Posterior vena cava (tissue), 2 donors: ENCODE measurements at regions of chr3 and their contacts with region 1.

Region 1: DNA sequence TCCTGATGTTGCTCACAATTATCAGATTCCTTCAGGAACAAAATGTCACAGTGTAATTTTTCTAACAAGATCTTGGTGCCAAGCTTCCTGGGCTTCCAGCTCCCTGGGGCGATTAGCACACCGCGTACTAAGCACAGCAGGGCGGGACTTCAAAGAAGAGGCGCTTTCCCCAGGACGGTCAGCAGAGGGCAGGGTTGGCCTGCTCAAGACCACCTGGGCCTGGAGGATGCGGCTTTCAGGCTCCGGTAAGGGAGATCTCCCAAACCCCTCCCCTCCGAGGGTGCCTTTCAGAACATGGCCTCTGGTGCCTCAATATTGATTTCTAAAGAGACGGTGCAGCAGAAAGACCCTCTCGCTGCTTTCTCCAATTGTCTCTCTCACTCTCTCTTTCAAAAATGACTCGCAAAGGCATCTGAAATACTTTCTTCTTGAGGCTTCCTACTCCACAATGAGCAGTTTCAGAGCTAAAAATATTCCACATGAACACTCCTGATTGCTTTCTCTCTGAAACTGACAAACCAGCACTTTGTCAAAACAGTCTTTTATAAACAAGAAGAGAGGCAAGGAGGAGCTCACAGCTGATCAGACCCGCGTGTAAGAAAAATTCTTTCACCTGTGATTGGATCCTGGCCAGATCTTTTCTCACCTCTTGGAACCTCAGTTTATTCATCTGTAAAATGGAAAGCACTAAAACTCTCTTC is 154.0 kb downstream of the ADAMTS9 start:
- DNase-seq: peak; percentile 94

Region 2: GRCh38 chr3:64475037-64475436 is 58.7 kb before region 1 on chr3:
- intact Hi-C with region 1: no loop called
- DNase-seq: no peak

Region 3: DNA sequence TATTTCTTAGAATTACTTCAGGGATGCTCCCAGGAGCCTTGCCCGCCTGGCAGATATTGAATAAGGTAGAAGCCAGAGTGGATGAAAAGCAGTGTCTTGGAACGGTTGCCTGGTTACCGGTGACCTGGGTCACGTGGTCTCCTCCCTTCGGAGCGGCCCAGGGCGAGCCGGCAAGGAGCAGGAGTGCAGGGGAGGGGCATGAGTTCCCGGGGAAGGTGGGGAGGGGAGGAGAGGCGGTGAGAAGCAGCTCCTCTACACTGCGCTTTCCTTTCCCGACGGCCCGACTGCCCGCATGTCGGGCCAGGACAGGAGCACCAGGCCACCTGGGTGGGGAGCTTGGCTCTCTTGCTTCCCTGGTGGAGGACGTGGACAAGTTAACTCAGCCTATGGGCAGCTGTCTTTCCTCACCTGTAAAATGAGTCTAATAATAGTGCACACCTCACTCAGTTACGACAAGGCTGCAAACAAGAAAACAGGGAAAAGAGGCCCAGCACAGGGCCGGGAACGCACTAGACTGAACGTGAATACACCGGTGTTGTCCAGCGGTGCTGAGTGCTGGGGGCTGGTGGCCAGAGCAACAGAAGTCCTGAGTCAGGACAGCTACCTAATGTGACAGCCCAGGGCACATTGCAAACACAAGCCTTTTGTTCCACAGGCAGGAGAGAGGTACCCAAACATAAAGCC is 44.3 kb before region 1 on chr3:
- intact Hi-C with region 1: no loop called
- DNase-seq: no peak

Region 4: GRCh38 chr3:64685800-64686445 is 152.2 kb after region 1 on chr3:
- intact Hi-C with region 1: loop called in 1 of 2 experiments (anchors 10 kb)
- DNase-seq: peak; percentile 95

Region 5: GRCh38 chr3:65245133-65246063 is 711.6 kb after region 1 on chr3:
- intact Hi-C with region 1: loop called (anchors 2 to 5 kb)
- DNase-seq: no peak